Activated naive CD4-positive, alpha-beta T cell treated with anti-CD3 and anti-CD28 coated beads for 36 hours (primary cell): ENCODE measurements at regions of chr9 and their contacts with region 1.

Region 1: DNA sequence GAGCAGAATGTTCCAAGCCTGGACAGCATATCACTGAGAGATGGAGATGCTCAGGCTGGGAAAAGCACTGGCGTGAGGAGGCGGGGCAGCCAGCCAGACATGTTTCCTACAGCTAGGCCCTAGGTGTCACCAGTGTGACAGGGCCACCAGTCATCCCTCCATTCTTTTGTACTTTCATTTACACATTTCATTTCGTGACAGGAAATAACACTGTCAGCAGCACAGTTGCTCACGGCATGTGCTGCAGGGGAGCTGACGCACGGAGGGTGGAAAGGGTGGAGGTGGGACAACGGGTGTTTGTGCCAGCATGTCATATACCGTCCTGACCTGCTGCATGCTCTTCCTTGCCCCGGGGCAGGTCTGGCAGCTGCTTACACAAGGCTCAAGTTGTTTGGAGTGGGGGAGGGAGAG is 14.8 kb upstream of the CEMIP2 start:
- DNase-seq: peak; percentile 95
- H3K4me3 Mint-ChIP-seq: peak overlapping the region; percentile 67
- H3K27ac Mint-ChIP-seq: peak overlapping the region; percentile 92
- H3K4me1 Mint-ChIP-seq: peaks cover 47% of the 10 kb centered on the region
- H3K27me3 Mint-ChIP-seq: no peaks in the 10 kb centered on the region

Region 2: GRCh38 chr9:70519912-70520724 is 1263.0 kb before region 1 on chr9:
- CTCF ChIA-PET with region 1: no interaction called
- intact Hi-C with region 1: loop called (anchors 10 kb)
- DNase-seq: peak; percentile 49
- H3K4me3 Mint-ChIP-seq: peak overlapping the region; percentile 53
- H3K27ac Mint-ChIP-seq: peak overlapping the region; percentile 82
- H3K4me1 Mint-ChIP-seq: peaks cover 32% of the 10 kb centered on the region
- H3K27me3 Mint-ChIP-seq: no peaks in the 10 kb centered on the region

Region 3: DNA sequence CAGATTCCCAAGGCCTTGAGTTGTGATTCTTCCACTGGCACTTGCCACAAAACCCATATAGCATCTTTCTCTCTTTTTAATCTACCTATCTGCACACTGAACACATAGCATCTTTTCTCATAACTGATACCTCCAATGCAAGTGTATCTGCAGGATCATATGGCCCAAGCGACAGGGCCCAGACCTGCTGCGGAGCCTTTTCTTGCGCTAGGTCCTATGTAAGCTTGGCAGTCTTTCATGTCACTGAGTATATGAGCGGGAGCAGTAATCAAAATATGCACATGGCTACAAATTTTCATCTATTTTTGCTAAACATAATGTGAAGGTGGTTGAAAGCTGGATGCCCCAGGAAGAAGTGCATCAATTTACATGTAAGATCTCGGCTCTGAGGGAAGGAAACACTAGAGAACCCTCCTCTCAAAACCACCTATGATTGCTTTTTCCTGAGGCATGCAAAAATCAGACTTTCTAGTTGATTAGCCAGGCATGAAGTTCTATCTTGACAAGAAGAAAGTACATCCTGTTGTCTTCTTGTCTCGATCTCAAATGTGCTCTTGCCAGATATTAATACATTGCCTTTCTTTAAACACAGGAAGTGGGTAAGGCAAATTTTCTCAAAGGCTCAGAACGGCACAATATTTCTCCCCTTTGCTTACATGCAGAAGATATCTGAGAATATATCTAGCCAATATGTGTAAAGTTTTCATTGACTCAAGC is 12.1 kb after region 1 on chr9:
- CTCF ChIA-PET with region 1: interaction called, 17 read pairs
- intact Hi-C with region 1: loop called (anchors 1 kb)
- DNase-seq: no peak
- H3K4me3 Mint-ChIP-seq: no peak overlapping the region
- H3K27ac Mint-ChIP-seq: peak overlapping the region; percentile 72
- H3K4me1 Mint-ChIP-seq: peaks cover 61% of the 10 kb centered on the region
- H3K27me3 Mint-ChIP-seq: no peaks in the 10 kb centered on the region

Region 4: GRCh38 chr9:71819115-71819739 is 36.1 kb after region 1 on chr9:
- CTCF ChIA-PET with region 1: interaction called, 19 read pairs
- intact Hi-C with region 1: loop called (anchors 1 kb)
- DNase-seq: peak; percentile 68
- H3K4me3 Mint-ChIP-seq: no peak overlapping the region
- H3K27ac Mint-ChIP-seq: no peak overlapping the region
- H3K4me1 Mint-ChIP-seq: peaks cover 16% of the 10 kb centered on the region
- H3K27me3 Mint-ChIP-seq: no peaks in the 10 kb centered on the region

Region 5: DNA sequence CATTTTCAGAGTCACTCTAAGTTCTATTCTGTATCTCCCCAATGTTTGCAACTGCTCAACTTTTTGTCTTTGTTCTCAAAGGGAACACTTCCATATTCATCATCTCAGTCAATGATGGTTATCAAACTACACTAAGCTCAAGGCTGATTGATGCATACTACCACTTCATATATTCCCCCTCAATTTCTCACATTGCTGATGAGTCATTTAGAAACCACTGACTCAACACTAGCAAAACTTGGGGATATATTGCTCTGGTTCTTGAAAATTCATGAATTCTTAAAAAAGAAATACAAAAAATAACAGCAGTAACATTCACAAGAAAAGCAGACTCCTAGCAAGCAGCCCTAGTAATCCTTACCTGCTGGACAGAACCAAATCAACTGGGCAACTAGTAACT is 75.7 kb after region 1 on chr9:
- CTCF ChIA-PET with region 1: no interaction called
- intact Hi-C with region 1: loop called (anchors 2 kb)
- DNase-seq: no peak
- H3K4me3 Mint-ChIP-seq: no peak overlapping the region
- H3K27ac Mint-ChIP-seq: peak overlapping the region; percentile 47
- H3K4me1 Mint-ChIP-seq: peaks cover 18% of the 10 kb centered on the region
- H3K27me3 Mint-ChIP-seq: no peaks in the 10 kb centered on the region